OCI-LY7 (cell line): ENCODE measurements at regions of chr16 and their contacts with region 1.

Region 1: DNA sequence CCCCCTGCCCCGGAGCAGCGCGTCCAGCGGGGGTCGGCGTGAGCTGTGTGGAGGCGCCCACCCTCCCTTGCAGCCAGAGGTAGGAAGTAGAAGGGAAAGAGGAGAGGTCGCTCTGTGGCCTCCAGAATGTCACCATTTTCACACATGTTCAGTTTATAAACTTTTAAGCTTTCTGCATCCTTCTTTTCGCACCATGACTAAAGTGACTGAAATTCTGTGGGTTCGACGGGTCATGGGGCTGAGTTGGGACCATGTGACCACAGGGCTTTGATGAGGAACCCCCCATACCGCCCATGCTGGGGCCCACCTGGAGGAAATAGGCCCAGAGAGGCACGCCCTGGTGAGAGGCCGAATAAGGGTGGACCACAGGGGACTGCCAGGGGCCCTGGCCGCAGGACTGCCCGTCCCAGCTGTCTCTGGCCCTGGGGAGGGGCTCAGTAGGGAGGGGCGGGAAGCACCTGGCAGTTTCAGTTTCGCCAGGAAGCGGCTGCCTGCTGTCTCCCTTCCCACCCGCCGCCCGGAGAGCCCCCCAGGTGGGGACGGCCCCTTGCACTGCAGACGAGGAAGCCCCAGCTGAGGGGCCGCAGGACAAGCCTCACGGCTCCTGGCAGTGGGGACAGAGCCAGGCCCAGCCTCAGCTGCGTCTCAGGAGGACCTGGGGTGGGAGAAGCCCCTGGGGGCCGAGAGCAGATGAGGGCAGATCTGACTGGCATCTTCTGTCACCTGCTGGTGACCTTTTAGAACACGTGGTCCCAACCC is 9.0 kb downstream of the CBFA2T3 start:
- DNase-seq: peak; percentile 94
- H3K4me3 ChIP-seq: peak overlapping the region; percentile 60
- H3K27ac ChIP-seq: peak overlapping the region; percentile 92
- H3K4me1 ChIP-seq: peaks cover 80% of the 10 kb centered on the region
- CTCF ChIP-seq: 0 out of 2 replicates have a peak, but pooled peaks have one; percentile 40

Region 2: DNA sequence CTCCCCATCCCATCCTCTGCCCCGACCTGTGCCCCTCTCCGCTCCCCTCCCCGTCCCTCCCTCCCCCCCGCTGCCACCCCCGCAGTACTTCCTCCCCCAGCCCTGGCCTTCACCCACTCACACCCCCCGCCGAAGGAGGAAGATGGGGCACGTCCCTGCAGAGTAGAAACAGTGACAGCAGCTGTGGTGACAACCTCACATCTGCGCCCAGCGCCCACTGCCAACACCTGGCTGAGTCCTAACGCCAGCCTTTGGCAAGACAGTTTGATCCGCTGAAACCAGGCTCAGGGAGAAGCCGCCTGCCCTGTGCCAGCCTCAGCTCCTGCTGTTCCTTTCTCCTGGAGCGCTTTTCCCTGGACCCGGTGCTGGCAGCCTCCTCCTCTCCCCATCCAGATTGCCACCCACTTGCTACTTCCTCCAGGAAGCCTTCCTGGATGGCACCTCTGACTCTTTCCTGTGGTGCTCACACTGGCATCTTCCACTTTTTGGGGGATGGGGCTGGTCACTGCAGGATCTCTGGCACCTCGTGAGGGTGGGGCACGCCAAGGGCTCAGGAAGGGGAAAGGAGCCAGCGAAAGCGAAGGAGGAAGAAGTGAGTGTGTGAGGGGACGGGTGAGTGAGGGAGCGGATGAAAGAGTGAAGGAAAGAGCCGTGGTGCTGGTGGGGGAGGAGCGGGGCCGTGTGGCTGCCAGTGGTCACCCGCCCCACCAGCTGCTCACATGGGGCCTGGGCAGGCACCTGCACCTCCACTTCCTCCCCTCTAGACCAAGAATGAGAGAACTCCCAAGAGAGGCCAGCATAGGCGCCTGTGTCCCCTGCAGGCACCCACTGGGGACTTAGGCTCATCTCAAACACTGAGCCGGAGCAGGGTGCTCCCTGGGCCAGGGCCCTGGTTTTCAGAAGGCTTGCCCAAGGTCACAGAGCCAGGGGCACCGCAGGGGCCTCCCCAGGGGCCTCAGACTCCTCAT is 487.9 kb before region 1 on chr16:
- CTCF ChIA-PET with region 1: no interaction called
- POLR2A ChIA-PET with region 1: no interaction called
- intact Hi-C with region 1: loop called (anchors 10 kb)
- DNase-seq: peak; percentile 78
- H3K4me3 ChIP-seq: peak overlapping the region; percentile 36
- H3K27ac ChIP-seq: peak overlapping the region; percentile 47
- H3K4me1 ChIP-seq: peaks cover 54% of the 10 kb centered on the region
- CTCF ChIP-seq: no peak

Region 3: DNA sequence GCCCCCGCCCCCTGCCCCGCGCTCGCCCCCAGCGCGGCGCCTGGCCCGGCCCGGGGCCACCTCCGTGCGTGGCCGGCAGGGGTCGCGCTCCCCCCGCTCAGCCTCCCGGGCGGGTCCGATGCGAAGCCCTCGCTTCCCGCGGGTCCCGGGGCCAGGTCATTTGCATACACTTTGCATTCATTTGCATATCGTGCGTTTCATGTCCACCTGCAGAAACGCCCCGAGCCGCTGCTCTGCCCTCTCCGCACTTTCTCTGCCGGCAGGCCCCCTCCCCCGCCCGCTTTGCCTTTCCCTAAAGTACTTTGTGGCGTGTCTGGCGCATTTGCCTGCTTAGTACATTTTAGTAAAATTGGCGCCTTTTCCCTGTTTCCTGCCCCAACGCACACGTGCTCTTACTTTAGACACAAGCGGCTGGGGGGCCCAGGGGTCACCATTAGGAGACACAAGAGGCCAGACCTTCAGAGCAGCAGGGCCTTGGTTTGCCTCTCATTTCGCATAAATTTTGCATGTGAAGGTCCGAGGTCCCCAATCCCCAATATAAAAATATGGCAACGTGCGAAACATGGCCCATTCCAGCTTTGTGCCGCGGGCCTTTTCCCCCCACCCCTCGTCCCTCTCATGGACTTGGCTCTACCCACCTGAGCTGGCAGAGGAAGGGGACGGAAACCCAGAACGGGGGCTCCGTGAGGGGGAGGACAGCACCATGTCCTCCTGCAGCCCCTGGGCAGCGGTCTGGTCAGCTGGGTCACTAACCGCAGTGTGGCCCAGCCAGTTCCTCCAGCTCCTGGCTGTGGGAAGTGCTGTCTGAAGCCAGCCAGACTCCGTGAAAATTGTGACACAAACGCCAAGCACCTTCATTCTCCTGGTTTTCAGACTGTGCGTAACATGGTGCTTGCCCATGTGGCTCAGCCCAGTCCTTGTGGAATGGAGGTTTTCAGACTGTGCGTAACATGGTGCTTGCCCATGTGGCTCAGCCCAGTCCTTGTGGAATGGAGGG is 25.8 kb before region 1 on chr16:
- CTCF ChIA-PET with region 1: no interaction called
- POLR2A ChIA-PET with region 1: interaction called, 3 read pairs
- intact Hi-C with region 1: loop called (anchors 1 kb)
- DNase-seq: peak; percentile 84
- H3K4me3 ChIP-seq: peak overlapping the region; percentile 47
- H3K27ac ChIP-seq: peak overlapping the region; percentile 2
- H3K4me1 ChIP-seq: peaks cover 49% of the 10 kb centered on the region
- CTCF ChIP-seq: peak; percentile 63

Region 4: DNA sequence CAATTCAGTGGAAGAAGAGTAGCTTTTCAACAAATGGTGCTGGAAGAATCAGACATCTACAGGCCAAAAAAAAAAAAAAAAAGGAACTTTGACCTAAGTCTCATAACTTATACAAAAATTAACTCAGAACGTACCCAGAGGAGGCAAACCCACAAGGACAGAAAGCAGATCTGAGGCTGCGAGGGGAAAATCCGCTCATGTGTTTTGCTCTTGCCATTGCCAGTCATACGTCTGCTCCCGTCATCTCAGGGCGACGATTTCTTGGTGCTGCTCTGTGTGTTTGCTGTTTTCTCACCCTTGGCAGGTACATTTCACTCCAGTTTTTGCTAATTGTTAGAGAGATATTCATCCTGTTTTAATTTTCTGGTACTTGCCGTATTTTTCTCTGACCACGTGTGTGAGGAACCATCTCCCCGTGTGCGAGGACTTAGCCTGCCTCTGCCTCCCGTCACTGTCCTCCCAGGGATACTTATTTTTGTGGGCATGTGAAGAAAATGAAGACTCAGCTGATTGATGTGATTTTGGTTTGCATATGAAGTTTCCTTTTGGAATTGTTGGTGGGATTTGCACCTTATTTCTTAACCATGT is 92.3 kb after region 1 on chr16:
- CTCF ChIA-PET with region 1: no interaction called
- POLR2A ChIA-PET with region 1: no interaction called
- intact Hi-C with region 1: loop called (anchors 1 kb)
- DNase-seq: peak; percentile 62
- H3K4me3 ChIP-seq: peak overlapping the region; percentile 28
- H3K27ac ChIP-seq: peak overlapping the region; percentile 36
- H3K4me1 ChIP-seq: peaks cover 54% of the 10 kb centered on the region
- CTCF ChIP-seq: no peak

Region 5: GRCh38 chr16:89122322-89122851 is 154.4 kb after region 1 on chr16:
- CTCF ChIA-PET with region 1: no interaction called
- POLR2A ChIA-PET with region 1: no interaction called
- intact Hi-C with region 1: loop called (anchors 1 kb)
- DNase-seq: peak; percentile 96
- H3K4me3 ChIP-seq: peak overlapping the region; percentile 43
- H3K27ac ChIP-seq: peak overlapping the region; percentile 97
- H3K4me1 ChIP-seq: peaks cover 38% of the 10 kb centered on the region
- CTCF ChIP-seq: peak; percentile 50; the same call in 1 of the 2 replicates